AG04449 (cell line): ENCODE measurements at regions of chrX and their contacts with region 1.

Region 1: GRCh38 chrX:123960042-123960611 is 1.4 kb upstream of the STAG2 start:
- DNase-seq: peak; percentile 28
- H3K4me3 ChIP-seq: peak overlapping the region; percentile 72
- CTCF ChIP-seq: peak; percentile 92

Region 2: GRCh38 chrX:123673813-123674212 is 286.3 kb before region 1 on chrX:
- CTCF ChIA-PET with region 1: no interaction called
- POLR2A ChIA-PET with region 1: no interaction called
- DNase-seq: peak; percentile 7
- H3K4me3 ChIP-seq: no peak overlapping the region
- CTCF ChIP-seq: no peak

Region 3: GRCh38 chrX:124018023-124018422 is 57.9 kb after region 1 on chrX:
- CTCF ChIA-PET with region 1: interaction called, 24 read pairs
- POLR2A ChIA-PET with region 1: no interaction called
- DNase-seq: no peak
- H3K4me3 ChIP-seq: no peak overlapping the region
- CTCF ChIP-seq: no peak